Activated B cell treated with CpG ODN at 0.5 μM for 24 hours (primary cell): ENCODE measurements at regions of chr2 and their contacts with region 1.

Region 1: DNA sequence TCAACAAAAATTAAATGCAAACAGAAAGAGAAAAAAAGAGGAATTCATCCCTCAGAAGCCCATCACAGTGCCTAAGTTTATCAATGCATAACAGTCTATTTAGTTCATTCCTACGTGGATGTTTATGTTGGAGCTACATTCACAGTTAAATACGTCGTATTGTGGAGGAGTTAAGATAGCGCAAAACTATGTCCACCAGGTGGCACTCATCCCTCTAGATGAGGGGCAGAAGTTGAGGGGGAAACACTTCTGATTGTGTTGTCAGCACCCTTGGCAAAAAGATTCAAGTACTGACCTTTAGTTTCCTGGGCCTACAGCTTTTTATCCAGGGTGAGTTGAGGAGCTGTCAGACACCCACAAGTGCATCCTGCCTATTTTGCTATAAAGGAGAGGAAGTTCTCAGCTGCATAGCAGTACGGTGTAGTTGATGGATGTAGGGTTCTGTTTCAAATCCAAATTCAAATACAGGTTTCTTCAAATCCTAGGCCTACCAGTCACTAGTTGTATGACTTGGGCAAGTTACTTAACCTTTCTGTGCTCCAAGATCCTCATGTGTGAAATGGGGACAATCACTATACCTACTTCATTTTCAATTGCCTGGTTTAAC is 26.8 kb upstream of the MYO1B start:
- DNase-seq: no peak
- ATAC-seq: peak; percentile 75
- H3K4me3 Mint-ChIP-seq: no peak overlapping the region
- H3K27ac Mint-ChIP-seq: no peak overlapping the region
- H3K4me1 Mint-ChIP-seq: peaks cover 10% of the 10 kb centered on the region
- H3K27me3 Mint-ChIP-seq: peaks cover 2% of the 10 kb centered on the region
- CTCF ChIP-seq: no peak

Region 2: GRCh38 chr2:190746971-190747761 is 471.2 kb before region 1 on chr2:
- CTCF ChIA-PET with region 1: no interaction called
- POLR2A ChIA-PET with region 1: no interaction called
- intact Hi-C with region 1: no loop called
- DNase-seq: no peak
- ATAC-seq: no peak
- H3K4me3 Mint-ChIP-seq: no peak overlapping the region
- H3K27ac Mint-ChIP-seq: no peak overlapping the region
- H3K4me1 Mint-ChIP-seq: no peaks in the 10 kb centered on the region
- H3K27me3 Mint-ChIP-seq: no peaks in the 10 kb centered on the region
- CTCF ChIP-seq: no peak

Region 3: DNA sequence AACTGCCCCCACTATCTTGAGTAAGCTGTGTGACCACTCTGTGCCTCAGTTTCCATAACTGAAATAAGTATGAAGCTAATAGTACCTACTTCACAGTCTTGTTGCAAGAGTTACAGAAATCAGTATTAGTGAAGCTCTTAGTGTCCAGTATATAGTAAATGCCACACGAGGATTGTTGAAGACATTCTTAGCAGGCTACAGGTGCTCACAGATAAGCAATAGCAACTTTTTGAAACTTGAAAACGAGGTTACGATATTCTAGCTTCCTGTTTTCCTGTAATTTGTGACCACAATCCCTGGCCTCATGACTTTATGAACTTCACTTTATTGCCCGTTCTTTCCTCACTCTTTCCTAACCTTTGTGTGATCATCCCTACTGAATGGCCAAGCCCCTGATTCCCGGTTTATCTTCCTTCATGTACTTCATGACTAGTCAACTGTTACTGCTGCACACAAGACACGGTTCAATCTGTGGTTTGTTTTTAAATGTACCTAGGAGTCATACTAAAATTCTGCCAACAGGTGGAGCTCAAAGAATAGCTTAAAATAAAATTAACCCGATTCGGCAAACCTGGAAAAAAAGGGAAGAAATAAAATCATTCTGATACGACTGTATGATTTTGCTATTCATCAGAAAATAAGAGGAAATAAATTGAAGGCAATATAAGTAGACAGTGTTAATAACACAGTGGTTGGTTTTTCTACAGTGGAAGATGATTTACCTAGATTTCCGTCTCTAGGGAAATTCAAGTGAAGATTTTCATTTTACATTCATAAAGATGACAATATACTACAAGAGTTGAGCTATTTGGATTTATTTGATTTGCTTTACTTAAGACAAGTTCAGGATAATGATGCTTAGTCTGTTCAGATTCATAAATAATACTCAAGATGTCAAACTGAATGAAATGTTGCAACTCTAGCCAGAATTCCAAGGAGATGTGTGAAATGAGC is 166.3 kb before region 1 on chr2:
- CTCF ChIA-PET with region 1: interaction called, 20 read pairs
- POLR2A ChIA-PET with region 1: no interaction called
- intact Hi-C with region 1: loop called (anchors 2 kb)
- DNase-seq: no peak
- ATAC-seq: peak; percentile 62
- H3K4me3 Mint-ChIP-seq: no peak overlapping the region
- H3K27ac Mint-ChIP-seq: no peak overlapping the region
- H3K4me1 Mint-ChIP-seq: no peaks in the 10 kb centered on the region
- H3K27me3 Mint-ChIP-seq: peaks cover 9% of the 10 kb centered on the region
- CTCF ChIP-seq: peak; percentile 70

Region 4: GRCh38 chr2:191245046-191245868 is 26.9 kb after region 1 on chr2 and contains the start of gene MYO1B:
- CTCF ChIA-PET with region 1: interaction called, 3 read pairs
- POLR2A ChIA-PET with region 1: no interaction called
- intact Hi-C with region 1: loop called (anchors 2 kb)
- DNase-seq: peak; percentile 58
- ATAC-seq: peak; percentile 77
- H3K4me3 Mint-ChIP-seq: peak within 1 kb of the TSS; percentile 77
- H3K27ac Mint-ChIP-seq: no peak within 1 kb of the TSS
- H3K4me1 Mint-ChIP-seq: peaks cover 16% of the 10 kb centered on the region
- H3K27me3 Mint-ChIP-seq: peaks cover 4% of the 10 kb centered on the region
- CTCF ChIP-seq: no peak
- total RNA-seq, gene MYO1B: 2.5 and 2.7 TPM in 2 replicates

Region 5: GRCh38 chr2:191369036-191369435 is 150.6 kb after region 1 on chr2:
- CTCF ChIA-PET with region 1: interaction called, 5 read pairs
- POLR2A ChIA-PET with region 1: no interaction called
- intact Hi-C with region 1: loop called (anchors 1 kb)
- DNase-seq: no peak
- ATAC-seq: no peak
- H3K4me3 Mint-ChIP-seq: no peak overlapping the region
- H3K27ac Mint-ChIP-seq: no peak overlapping the region
- H3K4me1 Mint-ChIP-seq: no peaks in the 10 kb centered on the region
- H3K27me3 Mint-ChIP-seq: no peaks in the 10 kb centered on the region
- CTCF ChIP-seq: no peak

Region 6: DNA sequence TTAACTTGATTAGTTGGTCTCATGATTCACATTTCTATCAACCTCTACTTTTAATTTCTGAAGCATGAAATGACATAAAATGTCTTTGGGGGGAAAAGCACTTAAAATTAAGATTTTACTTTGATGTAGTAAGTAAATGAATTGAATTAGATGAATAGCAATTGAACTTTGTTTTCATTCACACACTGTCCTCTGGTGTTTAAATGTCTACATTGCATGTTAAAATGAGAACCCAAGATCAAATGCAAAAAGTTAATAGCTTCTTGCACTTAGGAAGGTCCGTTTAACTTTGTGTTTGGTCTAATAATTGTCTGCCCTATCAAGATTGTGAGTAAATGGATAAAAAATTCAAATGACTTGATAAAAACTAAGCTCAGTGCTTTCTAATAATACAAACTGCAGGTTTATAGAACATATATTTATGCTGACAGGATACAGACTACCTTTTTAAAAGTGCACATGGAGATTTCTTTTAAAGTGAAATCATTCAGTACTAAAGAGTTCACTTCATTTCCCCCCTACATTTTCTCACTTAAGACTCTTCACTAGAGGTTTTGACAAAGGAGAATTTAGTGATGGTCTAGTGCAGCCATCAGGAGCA is 303.3 kb after region 1 on chr2:
- CTCF ChIA-PET with region 1: interaction called, 27 read pairs
- POLR2A ChIA-PET with region 1: no interaction called
- intact Hi-C with region 1: loop called (anchors 1 kb)
- DNase-seq: no peak
- ATAC-seq: no peak
- H3K4me3 Mint-ChIP-seq: no peak overlapping the region
- H3K27ac Mint-ChIP-seq: no peak overlapping the region
- H3K4me1 Mint-ChIP-seq: no peaks in the 10 kb centered on the region
- H3K27me3 Mint-ChIP-seq: peaks cover 9% of the 10 kb centered on the region
- CTCF ChIP-seq: peak; percentile 78